ENCODE measurements at regions of chr5 and their contacts with region 1.

Region 1: GRCh38 chr5:136249678-136250266 is 56.8 kb upstream of the SMIM32 start:
- DNase-seq: peak; percentile 36 to 70
- ATAC-seq: peak; percentile 82 to 97
- H3K4me3 ChIP-seq: no peak overlapping the region
- H3K27ac ChIP-seq: no peak overlapping the region
- H3K4me1 ChIP-seq: no peaks in the 10 kb centered on the region
- CTCF ChIP-seq: peak; percentile 91
- EP300 ChIP-seq: no peak
- POLR2A ChIP-seq: no peak
- RAD21 ChIP-seq: peak; percentile 90 to 96

Region 2: GRCh38 chr5:136235321-136235720 is 14.5 kb before region 1 on chr5:
- CTCF ChIA-PET with region 1: interaction called, 37 read pairs
- POLR2A ChIA-PET with region 1: no interaction called
- DNase-seq: peak in 1 of 2 experiments; percentile 11
- ATAC-seq: peak in 1 of 2 experiments; percentile 37; a peak in 2 of 6 replicates
- H3K4me3 ChIP-seq: no peak overlapping the region
- H3K27ac ChIP-seq: no peak overlapping the region; a peak in 2 of 6 replicates
- H3K4me1 ChIP-seq: 0 out of 3 replicates have a peak, but pooled peaks cover 6% of the 10 kb centered on the region
- CTCF ChIP-seq: no peak
- EP300 ChIP-seq: no peak
- POLR2A ChIP-seq: no peak
- RAD21 ChIP-seq: no peak

Region 3: GRCh38 chr5:136364307-136364706 is 114.5 kb after region 1 on chr5:
- CTCF ChIA-PET with region 1: interaction called, 29 read pairs
- POLR2A ChIA-PET with region 1: no interaction called
- DNase-seq: peak; percentile 7 to 10
- ATAC-seq: peak in 1 of 2 experiments; percentile 60; a peak in 2 of 6 replicates
- H3K4me3 ChIP-seq: no peak overlapping the region
- H3K27ac ChIP-seq: no peak overlapping the region
- H3K4me1 ChIP-seq: no peaks in the 10 kb centered on the region
- CTCF ChIP-seq: peak; percentile 56
- EP300 ChIP-seq: no peak
- POLR2A ChIP-seq: no peak
- RAD21 ChIP-seq: peak; percentile 61 to 63

Region 4: GRCh38 chr5:136686192-136686872 is 436.6 kb after region 1 on chr5:
- CTCF ChIA-PET with region 1: interaction called, 13 read pairs
- POLR2A ChIA-PET with region 1: no interaction called
- DNase-seq: peak in 1 of 2 experiments; percentile 27
- ATAC-seq: peak in 1 of 2 experiments; percentile 68; a peak in 3 of 6 replicates
- H3K4me3 ChIP-seq: no peak overlapping the region
- H3K27ac ChIP-seq: no peak overlapping the region
- H3K4me1 ChIP-seq: no peaks in the 10 kb centered on the region
- CTCF ChIP-seq: no peak
- EP300 ChIP-seq: no peak
- POLR2A ChIP-seq: no peak
- RAD21 ChIP-seq: peak in 1 of 2 experiments; percentile 45; a peak in 2 of 5 replicates

Region 5: DNA sequence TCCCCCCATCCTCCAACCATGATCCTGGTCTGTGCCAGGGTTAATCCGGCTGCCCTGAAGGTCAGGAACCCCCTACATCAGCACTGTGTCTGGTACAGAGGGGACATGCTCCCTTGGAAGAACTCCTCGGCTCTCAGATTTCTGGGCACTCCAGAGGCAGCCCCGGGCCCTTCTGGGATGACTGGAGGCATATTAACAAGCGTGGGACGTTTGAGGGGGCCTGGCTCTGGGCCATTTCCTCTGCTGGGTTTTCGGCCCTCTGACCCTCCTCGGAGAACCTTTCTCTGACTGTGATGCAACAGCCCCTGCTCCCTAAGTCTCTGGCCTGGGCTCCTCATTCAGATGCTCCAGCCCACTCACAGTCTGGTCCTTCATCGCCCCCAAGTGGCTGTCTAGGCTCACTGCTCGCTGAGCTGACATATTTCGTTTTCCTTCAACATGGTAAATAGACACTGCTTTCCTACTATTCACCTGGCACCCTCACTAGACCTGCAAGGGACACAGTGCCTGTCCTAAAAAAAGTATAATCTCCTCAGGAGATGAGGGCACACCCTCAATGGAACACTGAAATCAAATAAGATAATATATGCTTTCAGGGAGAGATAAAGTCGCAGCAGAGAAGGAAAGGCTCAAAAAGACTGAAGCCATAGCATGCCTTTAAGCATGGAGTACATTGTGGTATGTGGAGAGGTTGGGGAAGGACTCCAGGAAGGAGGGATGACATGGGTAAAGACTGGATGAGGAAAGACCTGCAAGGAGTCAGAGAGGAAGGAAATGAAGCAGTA is 520.3 kb after region 1 on chr5:
- CTCF ChIA-PET with region 1: interaction called, 135 read pairs
- POLR2A ChIA-PET with region 1: interaction called, 3 read pairs
- DNase-seq: peak; percentile 70 to 75
- ATAC-seq: peak; percentile 83 to 96; a peak in 5 of 6 replicates
- H3K4me3 ChIP-seq: no peak overlapping the region
- H3K27ac ChIP-seq: no peak overlapping the region
- H3K4me1 ChIP-seq: no peaks in the 10 kb centered on the region
- CTCF ChIP-seq: peak; percentile 81
- EP300 ChIP-seq: no peak
- POLR2A ChIP-seq: no peak
- RAD21 ChIP-seq: peak; percentile 92 to 99

Measured in A549 (cell line).